Calu3 (cell line): ENCODE measurements at regions of chr5 and their contacts with region 1.

Region 1: GRCh38 chr5:87541033-87541432 is 128.3 kb upstream of the CCNH start:
- DNase-seq: peak; percentile 61
- H3K4me3 Mint-ChIP-seq: no peak overlapping the region
- H3K27ac Mint-ChIP-seq: no peak overlapping the region
- H3K4me1 Mint-ChIP-seq: no peaks in the 10 kb centered on the region
- H3K27me3 Mint-ChIP-seq: no peaks in the 10 kb centered on the region
- CTCF ChIP-seq: no peak

Region 2: GRCh38 chr5:87650284-87650683 is 109.3 kb after region 1 on chr5:
- CTCF ChIA-PET with region 1: no interaction called
- intact Hi-C with region 1: no loop called
- DNase-seq: no peak
- H3K4me3 Mint-ChIP-seq: no peak overlapping the region
- H3K27ac Mint-ChIP-seq: no peak overlapping the region
- H3K4me1 Mint-ChIP-seq: peaks cover under 1% of the 10 kb centered on the region
- H3K27me3 Mint-ChIP-seq: no peaks in the 10 kb centered on the region
- CTCF ChIP-seq: no peak

Region 3: GRCh38 chr5:87661784-87662566 is 120.9 kb after region 1 on chr5:
- CTCF ChIA-PET with region 1: no interaction called
- intact Hi-C with region 1: loop called (anchors 10 kb)
- DNase-seq: no peak
- H3K4me3 Mint-ChIP-seq: no peak overlapping the region
- H3K27ac Mint-ChIP-seq: no peak overlapping the region
- H3K4me1 Mint-ChIP-seq: no peaks in the 10 kb centered on the region
- H3K27me3 Mint-ChIP-seq: no peaks in the 10 kb centered on the region
- CTCF ChIP-seq: no peak

Region 4: DNA sequence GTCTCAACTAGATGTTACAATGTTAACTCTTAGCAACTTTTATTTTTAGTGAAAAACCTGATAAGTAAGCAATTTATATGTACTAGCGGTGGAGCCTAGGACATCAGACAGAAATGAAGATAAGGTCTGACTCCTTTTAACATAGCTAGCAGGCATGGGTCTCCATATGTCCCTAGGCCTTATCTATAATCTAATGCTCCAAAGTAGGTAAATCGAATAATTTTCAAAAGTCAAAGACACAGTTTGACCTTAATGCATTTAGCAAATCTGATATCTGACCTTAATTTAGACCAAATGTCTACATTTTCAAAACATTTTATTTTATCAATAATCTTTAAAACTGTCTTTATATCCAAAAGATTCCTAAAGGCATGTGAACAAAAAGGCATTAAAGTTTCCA is 176.7 kb after region 1 on chr5:
- CTCF ChIA-PET with region 1: interaction called, 11 read pairs
- intact Hi-C with region 1: no loop called
- DNase-seq: no peak
- H3K4me3 Mint-ChIP-seq: no peak overlapping the region
- H3K27ac Mint-ChIP-seq: no peak overlapping the region
- H3K4me1 Mint-ChIP-seq: peaks cover 8% of the 10 kb centered on the region
- H3K27me3 Mint-ChIP-seq: no peaks in the 10 kb centered on the region
- CTCF ChIP-seq: no peak

Region 5: DNA sequence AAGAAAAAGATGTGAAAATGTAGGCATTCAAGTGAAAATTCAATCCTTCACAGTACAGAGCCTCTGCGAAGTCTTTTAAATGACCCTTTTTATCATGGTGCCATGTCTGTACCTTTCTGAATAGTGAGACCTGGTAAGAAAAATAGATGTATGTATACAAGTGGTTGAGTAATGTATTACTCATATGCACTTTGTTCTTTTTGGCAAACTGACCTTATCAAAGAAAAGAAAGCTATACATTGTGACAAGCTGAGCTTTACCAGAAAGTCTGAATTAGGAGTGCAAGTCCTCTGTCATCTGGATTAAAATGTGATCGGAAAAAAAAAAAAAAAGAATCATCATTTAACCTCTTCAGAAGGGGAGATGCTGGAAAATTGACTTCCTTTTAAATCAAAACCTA is 228.1 kb after region 1 on chr5:
- CTCF ChIA-PET with region 1: no interaction called
- intact Hi-C with region 1: loop called (anchors 5 kb)
- DNase-seq: no peak
- H3K4me3 Mint-ChIP-seq: no peak overlapping the region
- H3K27ac Mint-ChIP-seq: no peak overlapping the region
- H3K4me1 Mint-ChIP-seq: peaks cover 17% of the 10 kb centered on the region
- H3K27me3 Mint-ChIP-seq: no peaks in the 10 kb centered on the region
- CTCF ChIP-seq: no peak